ENCODE measurements at regions of chr6 and their contacts with region 1.

Region 1: DNA sequence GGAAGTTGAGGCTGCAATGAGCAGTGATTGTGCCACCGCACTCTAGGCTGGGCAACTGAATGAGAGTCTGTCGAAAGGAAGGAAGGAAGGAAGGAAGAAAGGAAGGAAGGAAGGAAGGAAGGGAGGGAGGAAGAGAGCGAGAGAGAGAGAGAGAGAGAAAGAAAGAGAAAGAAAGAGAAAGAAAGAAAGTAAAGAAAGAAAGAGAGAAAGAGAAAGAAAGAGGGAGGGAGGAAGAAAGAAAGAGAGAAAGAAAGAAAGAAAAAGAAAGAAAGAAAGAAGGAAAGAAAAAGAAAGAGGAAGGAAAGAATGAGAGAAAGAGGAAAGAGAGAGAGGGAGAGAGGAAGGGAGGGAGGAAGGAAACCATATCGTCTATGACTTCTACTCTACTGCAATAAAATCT is 60.2 kb downstream of the OPRM1 start:
- DNase-seq: no peak
- ATAC-seq: no peak
- H3K4me3 ChIP-seq: no peak overlapping the region
- H3K27ac ChIP-seq: no peak overlapping the region
- H3K4me1 ChIP-seq: no peaks in the 10 kb centered on the region
- H3K27me3 ChIP-seq: no peaks in the 10 kb centered on the region
- CTCF ChIP-seq: no peak

Region 2: DNA sequence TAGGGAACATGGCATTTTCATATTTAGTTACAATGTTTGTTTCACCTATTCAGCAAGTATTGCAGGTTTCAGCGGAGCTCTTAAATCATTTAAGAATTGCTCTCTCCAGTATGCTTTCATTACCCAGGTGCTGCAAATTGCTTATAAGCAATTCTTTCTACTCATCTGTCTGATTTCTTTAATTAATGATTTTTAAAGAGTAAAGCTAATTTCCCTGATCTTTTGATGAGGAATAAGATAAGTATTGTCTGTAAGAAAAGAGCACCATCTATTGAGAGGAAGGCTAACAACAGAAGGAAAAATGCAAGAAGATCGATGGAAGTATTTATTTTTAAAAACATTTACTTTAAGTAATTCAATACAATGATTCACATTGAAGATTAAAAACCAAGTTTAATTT is 58.2 kb before region 1 on chr6:
- CTCF ChIA-PET with region 1: no interaction called
- POLR2A ChIA-PET with region 1: no interaction called
- in situ Hi-C with region 1: no loop called
- intact Hi-C with region 1: loop called (anchors 2 kb)
- DNase-seq: no peak
- ATAC-seq: no peak
- H3K4me3 ChIP-seq: no peak overlapping the region
- H3K27ac ChIP-seq: no peak overlapping the region
- H3K4me1 ChIP-seq: no peaks in the 10 kb centered on the region
- H3K27me3 ChIP-seq: no peaks in the 10 kb centered on the region
- CTCF ChIP-seq: no peak; the same call in 1 of the 2 replicates

Region 3: GRCh38 chr6:154139892-154140291 is 40.7 kb after region 1 on chr6:
- CTCF ChIA-PET with region 1: no interaction called
- POLR2A ChIA-PET with region 1: no interaction called
- in situ Hi-C with region 1: no loop called
- intact Hi-C with region 1: no loop called
- DNase-seq: no peak
- ATAC-seq: no peak
- H3K4me3 ChIP-seq: no peak overlapping the region
- H3K27ac ChIP-seq: no peak overlapping the region
- H3K4me1 ChIP-seq: no peaks in the 10 kb centered on the region
- H3K27me3 ChIP-seq: no peaks in the 10 kb centered on the region
- CTCF ChIP-seq: no peak

Region 4: GRCh38 chr6:154558984-154559383 is 459.8 kb after region 1 on chr6:
- CTCF ChIA-PET with region 1: no interaction called
- POLR2A ChIA-PET with region 1: no interaction called
- in situ Hi-C with region 1: no loop called
- intact Hi-C with region 1: no loop called
- DNase-seq: no peak
- ATAC-seq: no peak
- H3K4me3 ChIP-seq: no peak overlapping the region
- H3K27ac ChIP-seq: no peak overlapping the region
- H3K4me1 ChIP-seq: peaks cover 16% of the 10 kb centered on the region
- H3K27me3 ChIP-seq: no peaks in the 10 kb centered on the region; the same call in 1 of the 2 replicates
- CTCF ChIP-seq: no peak

Measured in Panc1 (cell line).